Naive thymus-derived CD8-positive, alpha-beta T cell (primary cell): ENCODE measurements at regions of chr17 and their contacts with region 1.

Region 1: DNA sequence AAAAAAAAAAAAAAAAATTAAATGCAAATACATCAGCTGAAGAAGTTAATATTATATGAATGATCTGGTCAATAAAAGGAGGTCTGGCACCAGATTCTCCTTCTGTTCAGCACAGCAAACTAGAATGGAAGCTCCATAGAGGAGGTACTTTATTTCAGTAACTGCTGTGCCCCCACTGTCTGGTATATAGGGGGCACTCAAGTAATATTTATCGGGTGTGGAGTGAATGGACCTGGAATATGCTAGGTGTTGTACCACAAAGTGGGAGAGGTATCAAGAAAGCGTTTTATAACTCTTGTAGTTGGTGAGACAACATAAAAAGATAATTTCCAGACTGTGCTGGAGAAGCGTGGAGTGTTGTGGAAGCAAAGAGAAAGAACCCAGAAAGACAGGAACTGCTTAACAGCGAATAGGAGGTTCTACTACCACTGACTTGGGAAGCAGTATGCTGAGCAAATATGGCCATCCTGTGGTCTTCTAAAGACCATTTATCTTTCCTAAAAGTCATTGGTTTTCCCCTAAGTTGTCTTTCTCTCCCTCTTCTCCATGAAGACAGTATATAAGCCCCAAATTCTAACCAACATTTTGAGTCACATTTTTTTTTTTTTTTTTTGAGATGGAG is 12.2 kb upstream of the PRKCA start:
- DNase-seq: peak in 2 of 10 donors; percentile 33 to 34
- ATAC-seq: peak; percentile 66 to 67
- H3K4me3 Mint-ChIP-seq: peak overlapping the region in 3 of 10 donors; percentile 6 to 26 (median 14)
- H3K27ac Mint-ChIP-seq: peak overlapping the region in 6 of 10 donors; percentile 12 to 92 (median 71)
- H3K4me1 Mint-ChIP-seq: peaks cover 18 to 43% (median 37%) of the 10 kb centered on the region in 4 donors
- H3K27me3 Mint-ChIP-seq: no peaks in the 10 kb centered on the region

Region 2: DNA sequence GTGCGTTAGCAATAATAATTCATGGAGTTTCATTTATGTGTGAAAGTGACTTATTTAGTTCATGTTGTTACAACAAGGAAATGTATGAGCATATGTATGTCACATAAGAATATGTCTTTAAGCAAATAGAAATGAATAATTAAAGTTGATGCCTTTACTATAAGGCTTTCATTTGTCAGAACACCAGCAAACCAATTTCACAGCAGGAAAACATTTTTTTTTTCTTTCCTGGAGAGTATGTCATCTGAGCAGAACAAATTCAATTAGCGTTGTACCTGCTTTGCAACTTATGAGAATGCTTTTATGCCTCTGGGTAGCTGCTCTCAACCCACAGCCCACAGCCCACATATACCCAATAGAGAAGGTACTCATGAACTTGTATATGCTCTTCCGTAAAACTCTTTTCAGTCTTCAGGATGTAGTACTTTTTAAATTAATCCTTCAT is 34.7 kb before region 1 on chr17:
- POLR2A ChIA-PET with region 1: interaction called, 10 read pairs
- DNase-seq: peak in 6 of 10 donors; percentile 5 to 54 (median 18)
- ATAC-seq: peak; percentile 80 to 86
- H3K4me3 Mint-ChIP-seq: peak overlapping the region; percentile 38 to 83 (median 64)
- H3K27ac Mint-ChIP-seq: peak overlapping the region; percentile 70 to 92 (median 84)
- H3K4me1 Mint-ChIP-seq: peaks cover 8 to 23% (median 18%) of the 10 kb centered on the region in 4 donors
- H3K27me3 Mint-ChIP-seq: no peaks in the 10 kb centered on the region

Region 3: GRCh38 chr17:66331038-66331816 is 41.0 kb after region 1 on chr17:
- POLR2A ChIA-PET with region 1: interaction called, 11 read pairs
- DNase-seq: peak in 9 of 10 donors; percentile 5 to 86 (median 60)
- ATAC-seq: peak; percentile 85 to 88
- H3K4me3 Mint-ChIP-seq: peak overlapping the region; percentile 69 to 89 (median 84)
- H3K27ac Mint-ChIP-seq: peak overlapping the region; percentile 92 to 99 (median 98)
- H3K4me1 Mint-ChIP-seq: peaks cover 45 to 80% (median 78%) of the 10 kb centered on the region in 4 donors
- H3K27me3 Mint-ChIP-seq: no peaks in the 10 kb centered on the region